ENCODE measurements at regions of chr7 and their contacts with region 1.

Region 1: GRCh38 chr7:116588641-116589594 is 64.1 kb downstream of the CAV1 start:
- DNase-seq: no peak
- ATAC-seq: peak; percentile 47 to 57

Region 2: GRCh38 chr7:114606100-114606499 is 1982.8 kb before region 1 on chr7:
- intact Hi-C with region 1: no loop called
- DNase-seq: no peak
- ATAC-seq: no peak

Region 3: DNA sequence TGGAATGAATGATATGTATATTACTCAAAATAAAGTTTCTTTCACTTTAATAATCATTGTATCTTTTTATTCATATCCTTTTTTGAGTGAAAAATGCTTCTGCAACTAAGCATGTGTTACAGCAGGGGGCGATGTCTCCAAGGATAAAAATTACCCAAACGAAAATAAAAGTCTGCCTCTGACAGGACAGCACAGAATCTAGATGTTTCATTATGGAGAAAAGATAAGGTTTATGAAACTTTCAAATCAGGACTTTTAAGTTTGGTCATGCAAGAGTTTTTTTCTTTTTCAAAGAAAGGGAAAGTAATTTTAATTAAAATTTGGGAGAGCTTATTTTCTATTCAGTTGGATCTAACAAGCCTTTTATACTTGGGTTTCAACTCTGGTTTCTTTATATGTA is 330.2 kb before region 1 on chr7:
- intact Hi-C with region 1: loop called (anchors 2 to 5 kb)
- DNase-seq: no peak
- ATAC-seq: peak; percentile 66 to 68

Region 4: GRCh38 chr7:116443101-116443523 is 145.8 kb before region 1 on chr7:
- intact Hi-C with region 1: loop called in 1 of 2 experiments (anchors 10 kb)
- DNase-seq: no peak
- ATAC-seq: peak in 1 of 2 donors; percentile 80

Region 5: GRCh38 chr7:116511552-116512519 is 77.1 kb before region 1 on chr7:
- intact Hi-C with region 1: no loop called
- DNase-seq: peak; percentile 43
- ATAC-seq: peak; percentile 86 to 93

Region 6: DNA sequence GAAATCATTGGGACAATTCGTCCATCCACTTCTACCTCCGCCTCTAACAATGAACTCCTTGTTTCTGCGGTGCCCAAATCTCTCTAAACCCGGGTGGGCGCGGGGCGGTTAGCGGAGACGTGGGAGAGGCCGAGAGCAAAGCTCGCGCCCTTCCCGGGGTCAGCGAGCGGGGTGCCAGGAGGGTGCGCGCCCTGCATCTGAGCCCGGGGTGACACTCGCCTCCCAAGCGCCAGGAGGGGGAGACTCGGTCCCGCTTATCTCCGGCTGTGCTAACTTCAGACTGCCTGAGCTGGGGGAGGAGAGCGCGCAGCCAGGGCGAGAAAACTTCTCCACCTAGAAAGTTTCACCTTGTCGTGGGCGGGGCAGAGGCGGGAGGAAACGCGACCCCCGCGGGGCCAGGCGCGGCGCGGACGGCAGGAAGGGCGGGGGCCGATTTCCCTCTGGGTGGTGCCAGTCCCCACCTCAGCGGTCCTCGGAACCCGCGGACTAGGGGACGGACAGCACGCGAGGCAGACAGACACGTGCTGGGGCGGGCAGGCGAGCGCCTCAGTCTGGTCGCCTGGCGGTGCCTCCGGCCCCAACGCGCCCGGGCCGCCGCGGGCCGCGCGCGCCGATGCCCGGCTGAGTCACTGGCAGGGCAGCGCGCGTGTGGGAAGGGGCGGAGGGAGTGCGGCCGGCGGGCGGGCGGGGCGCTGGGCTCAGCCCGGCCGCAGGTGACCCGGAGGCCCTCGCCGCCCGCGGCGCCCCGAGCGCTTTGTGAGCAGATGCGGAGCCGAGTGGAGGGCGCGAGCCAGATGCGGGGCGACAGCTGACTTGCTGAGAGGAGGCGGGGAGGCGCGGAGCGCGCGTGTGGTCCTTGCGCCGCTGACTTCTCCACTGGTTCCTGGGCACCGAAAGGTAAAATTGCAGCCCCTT is 83.0 kb after region 1 on chr7 and contains the start of gene MET:
- intact Hi-C with region 1: loop called in 1 of 2 experiments (anchors 5 kb)
- DNase-seq: peak; percentile 79
- ATAC-seq: peak; percentile 92 to 97
- total RNA-seq, gene MET: 15.7 to 16.7 TPM

Region 7: DNA sequence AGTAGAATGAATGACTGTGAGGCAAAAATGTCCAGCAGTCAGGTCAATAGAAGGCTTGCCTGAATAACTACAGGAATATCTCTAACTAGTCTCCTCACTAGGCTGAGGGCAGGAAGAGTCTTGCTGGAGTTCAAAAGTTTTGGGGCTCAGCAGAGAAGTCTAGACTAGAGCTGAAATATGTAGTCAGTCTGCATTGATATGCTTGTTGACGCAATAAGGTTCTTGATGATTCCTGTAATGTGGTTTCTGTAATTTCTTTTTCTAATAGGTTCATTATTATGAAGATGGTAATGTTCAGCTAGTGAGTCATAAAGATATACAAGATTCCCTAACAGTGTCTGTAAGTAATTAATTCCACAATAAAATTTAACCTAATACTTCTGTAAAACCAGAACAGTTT is 322.9 kb after region 1 on chr7:
- intact Hi-C with region 1: no loop called
- DNase-seq: no peak
- ATAC-seq: no peak

Region 8: DNA sequence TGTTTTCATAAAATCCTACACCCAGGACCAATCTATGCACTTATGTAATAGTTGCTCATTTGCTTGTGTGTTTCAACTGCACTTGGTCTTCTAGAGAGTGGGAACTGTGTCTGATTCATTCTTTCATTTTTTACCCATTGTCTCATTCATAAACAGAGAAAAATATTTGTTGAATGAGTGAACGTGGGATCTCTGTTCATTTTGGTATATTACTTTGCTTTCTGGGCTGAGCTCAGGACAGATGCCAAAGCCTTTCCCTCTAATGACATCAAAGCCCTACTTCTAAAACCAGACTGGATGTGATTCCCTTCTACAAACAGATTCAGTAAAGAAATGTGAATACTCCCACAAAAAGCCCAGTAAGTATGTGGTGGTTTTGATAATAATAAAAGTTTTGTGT is 509.5 kb after region 1 on chr7:
- intact Hi-C with region 1: no loop called
- DNase-seq: no peak
- ATAC-seq: peak in 1 of 2 donors; percentile 61